ENCODE measurements at regions of chr14 and their contacts with region 1.

Region 1: GRCh38 chr14:67846029-67846610 is 26.5 kb downstream of the RAD51B start:
- DNase-seq: no peak
- ATAC-seq: no peak
- H3K4me3 ChIP-seq: no peak overlapping the region
- H3K27ac ChIP-seq: no peak overlapping the region
- H3K4me1 ChIP-seq: no peaks in the 10 kb centered on the region
- H3K27me3 ChIP-seq: no peaks in the 10 kb centered on the region
- CTCF ChIP-seq: no peak

Region 2: GRCh38 chr14:67987606-67988005 is 141.5 kb after region 1 on chr14:
- intact Hi-C with region 1: no loop called
- DNase-seq: no peak
- ATAC-seq: peak in 1 of 2 donors; percentile 35
- H3K4me3 ChIP-seq: no peak overlapping the region
- H3K27ac ChIP-seq: peak overlapping the region; percentile 18
- H3K4me1 ChIP-seq: no peaks in the 10 kb centered on the region
- H3K27me3 ChIP-seq: no peaks in the 10 kb centered on the region
- CTCF ChIP-seq: no peak

Region 3: DNA sequence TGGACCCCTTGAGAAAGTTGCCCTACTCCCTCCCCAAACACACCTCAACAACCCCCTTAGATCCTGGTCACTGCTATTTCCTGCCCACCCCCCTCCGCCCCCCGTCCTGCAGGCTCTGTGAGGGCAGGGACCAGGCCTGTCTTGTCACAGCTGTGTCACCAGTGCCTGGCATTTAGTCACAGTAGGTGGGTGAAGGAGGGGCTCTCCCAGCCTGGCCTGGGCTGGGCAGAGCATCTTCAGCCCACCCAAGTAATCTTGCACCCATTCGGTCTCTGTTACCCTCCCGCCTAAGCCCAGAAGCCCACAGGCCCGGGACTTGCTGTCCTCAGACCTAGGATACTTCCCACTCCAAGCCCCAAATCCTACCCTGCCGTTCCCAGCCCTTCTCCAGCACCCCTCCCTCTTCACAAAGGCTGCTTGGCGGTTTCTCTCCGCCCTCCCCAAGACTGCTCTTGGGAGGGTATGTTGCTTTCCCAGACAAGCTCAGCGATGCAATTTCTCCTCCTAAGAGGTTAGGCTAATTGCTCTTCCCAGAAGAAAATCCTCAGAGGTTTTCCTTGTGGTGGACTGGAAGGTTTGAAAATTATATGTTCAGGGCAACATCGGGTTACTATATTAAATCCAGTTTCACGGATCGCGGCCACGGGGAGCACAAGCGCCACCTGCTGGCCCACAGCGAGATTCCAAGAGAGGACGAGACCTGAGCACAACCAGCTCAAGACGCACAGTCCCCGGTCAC is 997.5 kb after region 1 on chr14:
- intact Hi-C with region 1: loop called (anchors 10 kb)
- DNase-seq: peak; percentile 85
- ATAC-seq: peak; percentile 91 to 93
- H3K4me3 ChIP-seq: peak overlapping the region; percentile 43
- H3K27ac ChIP-seq: no peak overlapping the region
- H3K4me1 ChIP-seq: no peaks in the 10 kb centered on the region
- H3K27me3 ChIP-seq: no peaks in the 10 kb centered on the region
- CTCF ChIP-seq: peak; percentile 93

Measured in lower lobe of right lung (tissue), 2 donors.